Common myeloid progenitor, CD34-positive (primary cell): ENCODE measurements at regions of chr1 and their contacts with region 1.

Region 1: DNA sequence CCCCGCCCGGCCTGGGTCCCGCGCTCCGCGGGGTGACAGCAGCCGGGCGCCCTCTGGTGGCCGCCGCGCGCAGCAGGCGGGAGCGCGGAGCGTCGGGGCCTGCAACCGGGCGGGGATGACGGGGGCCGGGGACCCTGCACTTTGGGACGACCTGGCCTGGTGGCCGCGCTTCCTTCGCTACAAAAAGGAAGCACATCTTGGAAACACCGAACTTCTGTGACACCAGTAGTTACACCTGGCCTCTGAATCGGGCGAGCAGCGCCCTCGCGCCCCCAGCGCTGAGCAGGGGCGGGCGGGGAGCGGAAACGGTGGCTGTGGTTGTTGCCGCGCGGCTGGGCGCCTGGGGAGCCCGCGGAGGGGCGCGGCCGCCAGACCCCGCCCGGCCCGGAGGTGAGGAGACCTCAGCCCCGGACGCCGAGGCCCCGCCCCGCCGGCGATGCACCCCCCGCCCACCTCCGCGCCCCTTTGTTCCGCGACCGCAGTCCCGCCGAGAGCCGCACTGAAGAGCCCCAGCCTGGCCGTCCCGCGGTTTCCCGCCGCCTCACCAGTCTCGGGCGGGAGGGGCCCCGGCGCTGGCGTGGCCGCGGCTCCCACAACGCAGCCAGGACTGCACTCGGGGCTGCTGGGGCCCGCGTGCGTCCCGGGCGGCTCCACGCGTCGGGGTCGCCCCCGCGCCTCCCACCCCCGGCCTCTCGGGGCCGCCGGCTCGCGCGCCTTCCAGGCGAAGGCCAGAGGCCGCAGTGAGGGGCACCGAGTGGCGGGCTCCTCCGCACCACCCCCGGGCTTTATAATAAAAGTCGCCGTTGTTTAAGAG is 59.3 kb downstream of the H3-3A start:
- DNase-seq: peak; percentile 68 to 86 (median 81)
- H3K4me3 ChIP-seq: peak overlapping the region; percentile 39 to 84 (median 72)
- H3K27ac ChIP-seq: peak overlapping the region in 1 of 2 experiments; percentile 14
- H3K4me1 ChIP-seq: peaks cover 0 to 27% (median 25%) of the 10 kb centered on the region in 4 experiments
- H3K27me3 ChIP-seq: no peaks in the 10 kb centered on the region

Region 2: DNA sequence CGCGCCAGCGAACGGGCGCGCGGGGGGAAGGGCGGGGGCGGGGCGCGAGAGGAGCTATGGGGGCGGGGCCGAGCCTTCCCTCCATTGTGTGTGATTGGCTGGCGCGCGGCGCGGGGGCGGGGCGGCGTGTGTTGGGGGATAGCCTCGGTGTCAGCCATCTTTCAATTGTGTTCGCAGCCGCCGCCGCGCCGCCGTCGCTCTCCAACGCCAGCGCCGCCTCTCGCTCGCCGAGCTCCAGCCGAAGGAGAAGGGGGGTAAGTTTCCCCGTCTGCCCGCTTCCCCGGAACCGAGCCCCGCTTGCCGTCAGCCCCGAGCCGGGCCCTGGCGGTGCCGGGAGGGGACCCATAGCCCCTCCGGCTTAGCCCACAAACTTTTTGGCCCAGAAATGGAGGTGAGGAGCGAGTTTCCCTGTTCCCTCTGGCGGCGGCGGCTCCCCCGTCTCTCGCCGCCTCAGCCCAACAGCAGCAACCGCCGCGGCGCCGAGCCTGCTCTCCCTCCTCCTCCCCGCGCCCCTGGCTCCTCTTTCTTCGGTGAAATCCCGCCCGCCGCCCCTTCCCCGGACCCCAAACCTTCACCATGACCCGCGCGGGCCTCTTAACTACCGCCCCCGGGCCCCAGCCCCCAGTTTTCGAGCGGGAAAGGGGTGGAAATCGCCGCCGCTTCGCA is 59.1 kb before region 1 on chr1 and contains the start of gene H3-3A:
- CTCF ChIA-PET with region 1: interaction called, 132 read pairs
- POLR2A ChIA-PET with region 1: interaction called, 3 read pairs
- DNase-seq: peak; percentile 93 to 97 (median 96)
- H3K4me3 ChIP-seq: peak within 1 kb of the TSS; percentile 85 to 100 (median 95)
- H3K27ac ChIP-seq: peak within 1 kb of the TSS; percentile 94 to 98
- H3K4me1 ChIP-seq: peaks cover 32 to 47% (median 36%) of the 10 kb centered on the region in 4 experiments
- H3K27me3 ChIP-seq: no peaks in the 10 kb centered on the region

Region 3: GRCh38 chr1:226100436-226101391 is 21.1 kb before region 1 on chr1:
- CTCF ChIA-PET with region 1: interaction called, 20 read pairs
- POLR2A ChIA-PET with region 1: no interaction called
- DNase-seq: peak; percentile 47 to 85 (median 76)
- H3K4me3 ChIP-seq: peak overlapping the region in 6 of 7 experiments; percentile 54 to 90 (median 66)
- H3K27ac ChIP-seq: peak overlapping the region in 1 of 2 experiments; percentile 70
- H3K4me1 ChIP-seq: peaks cover 5 to 13% (median 10%) of the 10 kb centered on the region in 4 experiments
- H3K27me3 ChIP-seq: no peaks in the 10 kb centered on the region

Region 4: GRCh38 chr1:226135059-226135651 is 13.4 kb after region 1 on chr1:
- CTCF ChIA-PET with region 1: interaction called, 31 read pairs
- POLR2A ChIA-PET with region 1: interaction called, 3 read pairs
- DNase-seq: no peak
- H3K4me3 ChIP-seq: no peak overlapping the region
- H3K27ac ChIP-seq: no peak overlapping the region
- H3K4me1 ChIP-seq: no peaks in the 10 kb centered on the region
- H3K27me3 ChIP-seq: no peaks in the 10 kb centered on the region

Region 5: DNA sequence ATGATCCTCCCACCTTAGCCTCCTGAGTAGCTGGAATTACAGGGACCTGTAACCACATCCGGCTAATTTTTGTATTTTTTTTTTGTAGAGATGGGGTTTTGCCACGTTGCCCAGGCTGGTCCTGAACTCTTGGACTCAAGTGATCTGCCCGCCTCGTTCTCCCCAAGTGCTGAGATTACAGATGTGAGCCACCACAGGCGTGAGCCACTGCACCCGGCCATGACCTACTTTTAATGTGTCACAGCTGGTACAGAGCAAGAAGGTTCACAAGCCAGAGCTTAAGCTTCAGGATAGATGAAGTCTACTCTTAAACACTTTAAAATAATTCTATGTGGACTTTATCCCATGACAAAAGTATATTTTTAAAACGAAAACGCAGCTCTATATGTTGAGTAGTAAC is 41.1 kb after region 1 on chr1:
- CTCF ChIA-PET with region 1: interaction called, 24 read pairs
- POLR2A ChIA-PET with region 1: no interaction called
- DNase-seq: no peak
- H3K4me3 ChIP-seq: no peak overlapping the region
- H3K27ac ChIP-seq: no peak overlapping the region
- H3K4me1 ChIP-seq: no peaks in the 10 kb centered on the region
- H3K27me3 ChIP-seq: no peaks in the 10 kb centered on the region

Region 6: DNA sequence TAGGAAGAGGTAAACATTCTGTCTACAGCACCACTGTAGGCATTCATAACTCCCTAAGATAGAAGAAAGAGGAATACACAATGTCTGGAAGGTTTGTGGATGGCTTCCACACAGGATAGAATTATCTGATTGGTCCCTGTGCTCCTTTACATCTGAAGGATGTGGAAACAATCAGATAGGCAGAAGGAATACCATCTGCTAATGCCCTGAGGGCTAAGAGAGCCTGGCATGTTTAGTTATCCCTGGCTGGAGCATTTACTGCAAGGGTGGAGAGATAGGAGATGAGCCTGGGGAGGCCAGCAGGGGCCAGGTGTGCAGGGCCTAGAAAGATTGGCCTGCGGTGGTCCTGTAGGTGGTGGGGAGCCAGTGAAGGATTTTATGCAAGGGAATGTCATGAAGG is 73.3 kb after region 1 on chr1:
- CTCF ChIA-PET with region 1: interaction called, 89 read pairs
- POLR2A ChIA-PET with region 1: interaction called, 4 read pairs
- DNase-seq: no peak
- H3K4me3 ChIP-seq: no peak overlapping the region
- H3K27ac ChIP-seq: no peak overlapping the region
- H3K4me1 ChIP-seq: peaks cover 0 to 3% (median 0%) of the 10 kb centered on the region in 4 experiments
- H3K27me3 ChIP-seq: no peaks in the 10 kb centered on the region